ENCODE measurements at regions of chr2 and their contacts with region 1.

Region 1: GRCh38 chr2:30231212-30231995 is at the start of gene LBH:
- DNase-seq: peak; percentile 92
- ATAC-seq: peak; percentile 83
- total RNA-seq, gene LBH: 133 TPM

Region 2: DNA sequence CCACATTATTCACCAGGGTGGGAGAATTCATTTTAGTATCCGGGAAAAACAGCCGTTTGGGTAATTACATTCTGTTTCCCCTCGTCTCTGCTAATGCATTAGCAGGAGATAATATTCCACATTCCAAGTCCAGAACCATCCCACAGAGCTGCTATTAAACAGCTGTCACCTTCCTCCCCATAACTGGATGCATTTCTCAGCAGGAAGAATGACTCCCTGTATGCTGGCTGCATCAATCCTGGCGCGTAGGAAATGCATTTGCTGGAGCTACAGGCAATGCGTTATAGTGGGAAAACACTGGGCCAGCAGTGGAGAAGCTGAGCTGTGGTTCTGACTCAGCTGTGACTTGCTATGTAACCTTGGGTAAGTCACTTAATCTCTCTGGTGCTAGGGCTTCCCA is 870.2 kb before region 1 on chr2:
- intact Hi-C with region 1: no loop called
- DNase-seq: no peak
- ATAC-seq: no peak

Region 3: DNA sequence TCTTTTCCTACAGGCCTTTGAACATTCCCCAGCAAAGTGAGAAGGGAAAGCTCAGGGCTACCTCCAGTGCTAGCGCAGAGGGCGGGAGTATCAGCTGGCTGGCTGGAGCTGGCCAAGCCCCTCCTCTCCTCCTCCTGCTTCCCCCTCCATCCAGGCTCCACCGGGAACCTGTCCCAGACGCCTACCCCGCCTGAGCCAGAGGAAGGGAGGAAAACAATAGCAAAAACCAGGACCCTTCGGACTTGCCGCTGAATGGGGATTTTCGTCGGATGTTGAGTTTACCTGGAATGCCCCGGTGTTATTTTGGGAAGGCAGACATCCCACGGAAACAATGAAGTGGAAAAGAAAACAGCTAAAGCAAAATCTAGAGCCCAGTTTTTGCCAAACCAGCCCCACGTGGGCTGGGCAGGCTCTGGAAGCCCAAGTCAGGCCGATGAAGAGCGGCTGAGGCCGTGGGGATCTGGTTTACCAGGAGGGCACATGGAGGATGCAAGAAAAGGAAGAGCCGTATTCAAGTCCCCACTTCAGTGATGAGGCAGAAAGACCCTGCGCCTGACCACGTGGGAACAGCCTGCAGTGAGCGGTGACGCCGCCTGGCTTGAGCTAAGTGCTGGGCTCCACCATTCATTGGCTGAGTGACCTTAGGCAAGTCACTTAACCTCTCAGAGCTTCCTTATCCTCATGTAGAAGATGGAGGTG is 115.2 kb after region 1 on chr2:
- intact Hi-C with region 1: loop called (anchors 2 kb)
- DNase-seq: peak; percentile 80
- ATAC-seq: peak; percentile 97

Region 4: DNA sequence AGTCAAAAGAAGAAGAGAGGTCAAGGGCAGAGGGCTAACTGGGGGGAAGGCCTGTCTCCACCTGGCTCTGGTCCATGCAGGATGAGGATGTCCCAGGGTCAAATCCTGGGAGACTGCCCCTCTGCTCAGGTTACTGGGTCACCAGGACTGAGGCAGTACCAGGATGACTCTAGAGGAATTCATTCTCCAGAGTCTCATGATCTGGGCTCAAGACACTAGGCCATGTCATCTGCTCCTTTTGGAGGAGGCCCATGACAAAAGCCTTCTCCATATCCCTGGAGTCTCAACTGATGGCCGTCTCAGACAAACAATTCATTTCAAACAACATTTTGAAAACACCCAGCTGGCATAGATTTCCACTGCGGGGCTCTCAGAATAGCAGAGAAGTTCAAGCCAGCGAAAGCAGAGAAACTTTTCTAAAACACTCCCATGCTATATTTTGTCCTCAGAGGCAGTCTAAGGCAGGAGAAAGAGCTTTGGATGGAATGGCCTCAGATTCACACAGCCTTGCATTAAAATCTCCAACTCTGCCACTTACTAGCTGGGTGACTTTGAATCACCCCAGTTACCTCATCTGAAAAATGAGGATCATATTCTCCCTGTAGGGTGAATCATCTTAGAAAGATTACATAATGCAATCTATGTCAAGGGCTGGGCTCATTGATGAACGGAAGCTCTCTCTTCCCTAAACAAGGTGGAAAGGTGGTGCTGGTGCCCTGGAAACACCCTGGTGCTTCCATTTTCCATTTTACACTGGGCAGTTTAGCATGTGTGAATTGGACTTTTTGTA is 166.9 kb after region 1 on chr2:
- intact Hi-C with region 1: no loop called
- DNase-seq: no peak
- ATAC-seq: peak; percentile 37

Measured in Right ventricle myocardium inferior (tissue), 1 donor.